HEK293T (cell line): ENCODE measurements at regions of chr3 and their contacts with region 1.

Region 1: GRCh38 chr3:100260685-100261484 is at the start of gene TBC1D23:
- DNase-seq: peak; percentile 99

Region 2: DNA sequence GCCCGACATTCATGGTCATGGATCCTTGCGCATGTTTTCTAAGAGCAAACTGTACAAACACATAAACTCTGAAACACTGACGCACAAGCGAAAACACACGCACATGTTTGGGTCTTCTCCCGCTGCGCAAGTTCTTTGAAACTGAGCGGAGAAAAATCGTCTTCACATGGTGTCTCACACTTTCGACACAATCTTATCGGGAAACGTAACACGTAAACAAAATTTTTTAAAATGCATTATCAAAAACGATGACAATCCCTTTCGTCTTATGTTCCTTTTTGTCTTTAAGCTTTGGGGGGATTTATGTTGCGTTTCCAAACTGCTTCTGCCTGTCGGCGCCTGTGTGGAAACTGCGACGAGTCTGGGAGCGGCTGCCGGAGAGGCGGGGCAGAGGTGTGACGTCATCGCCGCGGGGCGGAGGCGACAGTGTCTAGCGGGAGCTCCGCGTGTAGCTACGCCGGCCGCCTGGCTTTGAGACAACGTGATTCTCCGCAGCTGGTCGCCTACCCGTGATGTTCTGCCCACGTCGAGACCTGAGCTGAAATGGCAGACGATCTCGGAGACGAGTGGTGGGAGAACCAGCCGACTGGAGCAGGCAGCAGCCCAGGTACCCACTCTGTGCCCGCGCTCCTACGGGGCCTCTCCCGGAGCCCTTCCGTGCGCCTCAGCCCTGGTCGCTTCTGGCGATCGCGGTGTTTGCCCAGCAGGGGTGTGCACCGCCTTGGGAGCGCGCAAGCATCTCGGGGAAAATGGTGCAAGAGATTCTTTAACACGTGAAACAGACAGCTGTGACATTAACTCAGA is 443.2 kb before region 1 on chr3 and contains the start of gene CMSS1:
- CTCF ChIA-PET with region 1: no interaction called
- POLR2A ChIA-PET with region 1: interaction called, 13 read pairs
- DNase-seq: peak; percentile 91

Region 3: DNA sequence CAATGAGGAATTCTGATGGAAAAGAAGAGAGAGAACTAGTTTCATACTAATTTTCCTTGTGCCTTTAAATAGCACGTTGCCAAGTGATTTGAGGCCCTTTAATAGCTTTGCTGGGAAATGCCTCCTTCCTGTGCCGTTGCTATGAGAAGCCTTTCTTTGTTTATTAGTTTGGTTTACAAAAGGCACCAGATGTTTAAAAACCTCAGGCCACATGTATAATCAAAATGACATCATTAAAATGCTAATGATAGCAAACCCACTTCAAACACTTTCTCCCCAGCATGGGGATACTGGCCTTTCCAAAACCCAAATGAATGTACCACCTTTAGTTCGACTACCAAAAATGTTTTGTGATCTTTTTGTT is 50.1 kb before region 1 on chr3:
- CTCF ChIA-PET with region 1: no interaction called
- POLR2A ChIA-PET with region 1: no interaction called
- DNase-seq: no peak

Region 4: DNA sequence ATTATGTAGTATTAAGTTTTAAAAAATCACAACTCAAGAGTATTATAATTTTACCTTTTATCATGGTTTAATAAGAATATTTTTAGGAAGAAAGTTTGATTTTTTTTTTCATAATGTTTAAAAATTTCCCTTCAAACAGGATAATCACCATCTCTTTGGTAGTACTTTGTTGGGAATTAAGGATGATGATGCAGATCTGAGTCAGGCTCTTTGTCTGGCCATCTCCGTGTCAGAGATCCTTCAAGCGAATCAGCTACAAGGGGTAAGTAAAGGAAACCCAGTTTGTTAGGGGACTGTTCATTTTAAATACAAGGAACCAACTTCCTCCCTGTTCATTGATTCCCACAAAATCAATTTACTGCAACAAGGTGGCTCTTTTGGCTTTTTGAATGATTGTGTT is 36.9 kb after region 1 on chr3:
- CTCF ChIA-PET with region 1: no interaction called
- POLR2A ChIA-PET with region 1: no interaction called
- DNase-seq: no peak